ENCODE measurements at regions of chr10 and their contacts with region 1.

Region 1: DNA sequence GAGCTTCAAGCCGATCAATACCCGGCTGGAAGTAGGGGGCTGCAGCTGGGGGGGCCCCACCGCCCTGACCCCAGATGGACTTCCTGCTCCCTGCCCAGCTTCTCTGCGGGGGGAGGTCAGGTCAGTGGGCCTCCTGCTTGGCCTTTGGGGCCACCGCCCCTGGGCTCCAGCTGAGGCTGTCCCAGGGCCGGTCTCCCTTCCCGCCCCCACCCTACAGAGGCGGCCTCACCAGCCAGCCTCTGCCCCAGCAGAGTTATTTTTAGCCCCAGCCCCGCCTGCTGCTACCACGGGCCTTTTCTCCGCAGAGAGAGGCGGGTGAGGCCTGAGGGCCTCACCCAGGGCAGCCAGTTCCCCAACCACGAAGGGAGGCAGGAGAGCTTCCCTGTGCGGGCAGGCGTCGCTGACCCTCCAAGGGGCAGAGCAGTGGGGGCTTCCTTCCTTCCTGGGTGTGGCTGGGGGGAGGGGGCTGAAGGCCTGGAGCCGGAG is 24.4 kb downstream of the PWWP2B start:
- DNase-seq: peak; percentile 64
- H3K4me3 Mint-ChIP-seq: peak overlapping the region; percentile 52
- H3K27ac Mint-ChIP-seq: no peak overlapping the region
- H3K4me1 Mint-ChIP-seq: peaks cover 6% of the 10 kb centered on the region
- H3K27me3 Mint-ChIP-seq: no peaks in the 10 kb centered on the region
- CTCF ChIP-seq: no peak

Region 2: DNA sequence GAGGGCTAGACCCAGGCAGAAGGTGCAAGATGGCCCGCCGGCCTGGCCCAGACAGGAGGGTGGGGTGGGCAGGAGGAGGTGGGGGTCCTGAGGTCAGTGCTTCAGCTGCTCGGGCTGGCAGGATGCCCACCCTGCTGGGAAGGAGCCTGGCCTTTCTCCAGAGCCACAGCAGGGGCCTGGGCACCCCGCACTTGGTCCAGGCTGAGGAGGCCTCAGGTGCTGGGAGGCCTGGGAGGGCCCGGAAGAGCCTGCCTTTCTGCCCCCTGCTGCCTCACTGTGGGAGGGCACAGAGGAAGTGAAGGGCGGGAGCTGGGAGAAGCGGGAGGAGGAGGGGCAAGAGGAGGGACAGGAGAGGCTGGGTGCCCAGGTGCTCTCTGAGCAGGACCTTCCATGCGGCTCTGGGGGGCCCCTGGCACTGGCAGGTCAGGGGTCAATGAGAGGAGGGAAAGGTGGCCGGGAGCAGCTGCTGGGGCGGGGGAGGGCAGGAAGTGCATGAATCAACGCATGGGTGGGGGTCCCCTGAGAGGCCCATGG is 25.3 kb after region 1 on chr10:
- CTCF ChIA-PET with region 1: interaction called, 5 read pairs
- intact Hi-C with region 1: loop called (anchors 2 kb)
- DNase-seq: peak; percentile 80
- H3K4me3 Mint-ChIP-seq: no peak overlapping the region
- H3K27ac Mint-ChIP-seq: no peak overlapping the region
- H3K4me1 Mint-ChIP-seq: peaks cover 20% of the 10 kb centered on the region
- H3K27me3 Mint-ChIP-seq: no peaks in the 10 kb centered on the region
- CTCF ChIP-seq: peak; percentile 58

Region 3: GRCh38 chr10:132836832-132837540 is 415.6 kb after region 1 on chr10:
- CTCF ChIA-PET with region 1: no interaction called
- intact Hi-C with region 1: no loop called
- DNase-seq: peak; percentile 41
- H3K4me3 Mint-ChIP-seq: no peak overlapping the region
- H3K27ac Mint-ChIP-seq: no peak overlapping the region
- H3K4me1 Mint-ChIP-seq: no peaks in the 10 kb centered on the region
- H3K27me3 Mint-ChIP-seq: peaks cover 44% of the 10 kb centered on the region
- CTCF ChIP-seq: peak; percentile 75

Measured in Calu3 (cell line).